ENCODE measurements at regions of chr2 and their contacts with region 1.

Region 1: DNA sequence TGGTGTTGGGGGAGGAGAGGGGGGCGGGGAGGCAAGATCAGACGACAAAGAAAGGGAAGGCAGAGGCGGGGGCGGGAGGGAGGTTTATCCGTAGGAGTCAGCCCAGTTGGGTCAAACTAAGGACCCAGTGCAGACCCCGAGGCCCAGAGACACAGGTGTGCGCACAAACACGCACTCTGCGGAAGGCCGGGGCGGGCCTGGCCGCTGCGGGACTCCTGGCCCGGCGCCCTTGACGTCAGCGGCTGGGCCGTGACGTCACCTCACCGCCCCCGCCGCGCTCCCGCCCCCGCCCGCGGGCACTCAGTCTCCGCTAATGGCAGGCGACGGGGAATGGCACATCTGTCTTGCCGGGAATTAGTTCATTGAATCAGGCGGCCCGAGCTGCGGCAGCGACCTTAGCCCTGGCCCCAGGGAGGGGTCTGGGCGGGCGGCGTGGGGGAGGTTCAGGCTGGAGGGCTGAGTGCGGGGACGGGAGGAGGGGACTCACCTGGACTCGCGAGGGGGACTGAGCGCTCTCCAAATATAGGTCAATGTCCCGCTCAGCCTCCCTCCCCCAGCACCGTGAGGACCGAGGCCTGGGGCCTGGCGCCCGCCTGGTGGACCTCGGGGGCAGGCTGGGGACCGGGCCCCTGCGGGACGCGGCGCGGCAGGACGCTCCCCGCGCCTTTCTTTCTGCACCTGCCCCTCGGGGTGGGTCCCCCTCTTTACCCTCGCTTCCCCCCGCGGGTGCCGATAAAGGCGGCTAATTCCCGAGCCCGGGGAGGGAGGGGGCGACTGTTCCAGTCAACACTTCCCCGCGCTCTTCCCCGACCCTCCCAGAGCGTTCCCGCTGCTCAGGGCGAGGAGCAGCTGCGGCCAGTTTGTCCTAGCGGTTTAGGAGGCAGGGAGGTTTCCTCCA is 15.5 kb upstream of the ECEL1 start:
- DNase-seq: no peak
- ATAC-seq: peak; percentile 63 to 85 (median 72)
- H3K4me3 ChIP-seq: peak overlapping the region; percentile 66
- H3K27ac ChIP-seq: no peak overlapping the region
- H3K4me1 ChIP-seq: no peaks in the 10 kb centered on the region
- H3K27me3 ChIP-seq: no peaks in the 10 kb centered on the region
- CTCF ChIP-seq: no peak

Region 2: DNA sequence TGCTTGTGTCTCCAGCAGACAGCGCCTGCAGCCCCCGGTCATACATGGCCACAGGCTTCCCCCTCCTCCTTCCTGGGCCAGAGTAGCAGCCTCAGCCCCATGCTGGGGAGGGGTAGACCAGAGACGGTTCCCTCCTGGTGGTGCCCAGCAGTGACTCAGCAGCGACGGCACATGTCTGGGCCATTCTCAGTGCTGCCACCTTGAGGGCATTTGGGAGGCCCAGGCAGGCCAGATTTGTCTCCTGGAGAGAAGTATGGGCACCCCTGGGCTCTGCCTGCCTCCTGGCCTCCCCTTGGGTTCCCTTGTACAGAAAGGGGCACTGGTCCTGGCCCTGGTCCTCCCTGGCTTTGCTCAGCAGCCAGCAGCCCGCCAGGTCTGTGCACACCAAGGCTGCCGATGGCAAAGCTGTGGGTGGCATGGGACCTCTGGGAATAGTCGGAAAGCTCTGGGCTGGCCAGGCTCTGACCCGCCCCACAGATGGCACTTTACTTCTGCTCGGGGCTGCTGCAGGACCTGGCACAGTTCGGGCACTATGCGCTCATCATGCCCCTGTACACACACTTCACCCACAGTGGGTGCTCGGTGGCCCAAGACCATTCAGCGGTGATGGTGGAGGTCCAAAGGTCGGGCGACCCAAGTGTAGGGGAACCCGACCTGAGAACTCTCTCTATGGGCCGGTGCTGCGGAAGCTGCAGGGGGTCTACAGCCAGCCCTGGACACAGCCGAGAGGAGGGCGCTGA is 58.6 kb before region 1 on chr2:
- intact Hi-C with region 1: loop called in 1 of 2 experiments (anchors 5 kb)
- DNase-seq: peak; percentile 50 to 68
- ATAC-seq: peak in 3 of 4 donors; percentile 48 to 56 (median 55)
- H3K4me3 ChIP-seq: no peak overlapping the region
- H3K27ac ChIP-seq: peak overlapping the region; percentile 30
- H3K4me1 ChIP-seq: peaks cover 7% of the 10 kb centered on the region
- H3K27me3 ChIP-seq: no peaks in the 10 kb centered on the region
- CTCF ChIP-seq: peak; percentile 40

Region 3: DNA sequence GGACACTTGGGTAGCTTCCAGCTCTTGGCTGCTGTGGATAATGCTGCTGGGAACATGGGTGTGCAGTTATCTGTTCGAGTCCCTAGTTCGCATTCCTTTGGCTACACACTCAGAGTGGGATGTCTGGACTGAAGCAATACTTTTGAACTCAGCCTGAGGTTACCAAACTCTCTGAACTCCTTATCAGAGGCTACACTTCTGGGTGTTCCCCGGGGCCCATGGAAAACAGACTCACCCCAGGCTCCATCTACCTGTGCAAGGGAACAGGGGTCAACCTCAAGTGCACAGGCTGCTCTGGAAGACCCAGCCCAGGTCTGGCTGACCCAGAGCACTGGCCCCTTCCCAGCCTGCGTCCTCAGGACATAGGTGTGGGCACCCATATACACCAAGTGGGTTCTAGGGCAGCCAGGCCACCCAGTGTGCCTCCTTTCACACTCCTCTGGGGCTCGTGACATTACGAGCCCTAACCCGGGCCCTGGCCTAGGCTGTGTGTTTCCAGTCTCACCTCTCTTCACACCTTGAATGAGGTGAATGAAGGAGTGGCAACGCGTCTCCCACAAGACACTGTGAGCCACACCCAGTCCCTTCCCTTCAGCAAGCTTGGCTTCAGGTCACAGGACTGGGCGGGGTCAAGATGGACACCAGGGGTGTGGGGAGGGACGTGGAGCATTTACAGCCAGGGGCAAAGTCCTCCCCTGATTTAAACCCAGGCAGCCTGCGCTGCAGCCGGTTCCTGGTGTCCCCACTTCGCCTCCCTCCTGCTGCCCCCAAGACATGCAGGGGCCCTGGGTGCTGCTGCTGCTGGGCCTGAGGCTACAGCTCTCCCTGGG is 47.5 kb before region 1 on chr2 and contains the start of gene ALPI:
- intact Hi-C with region 1: no loop called
- DNase-seq: peak in 1 of 2 donors; percentile 36
- ATAC-seq: no peak
- H3K4me3 ChIP-seq: no peak within 1 kb of the TSS
- H3K27ac ChIP-seq: no peak within 1 kb of the TSS
- H3K4me1 ChIP-seq: no peaks in the 10 kb centered on the region
- H3K27me3 ChIP-seq: peaks cover 0 to 16% (median 0%) of the 10 kb centered on the region in 3 donors
- CTCF ChIP-seq: no peak
- total RNA-seq, gene ALPI: not detected

Region 4: GRCh38 chr2:232487385-232488096 is 15.6 kb before region 1 on chr2 and contains the start of gene ECEL1:
- intact Hi-C with region 1: no loop called
- DNase-seq: peak in 1 of 2 donors; percentile 44
- ATAC-seq: peak in 2 of 4 donors; percentile 49 to 59
- H3K4me3 ChIP-seq: peak within 1 kb of the TSS; percentile 47
- H3K27ac ChIP-seq: no peak within 1 kb of the TSS
- H3K4me1 ChIP-seq: no peaks in the 10 kb centered on the region
- H3K27me3 ChIP-seq: peaks cover 0 to 59% (median 23%) of the 10 kb centered on the region in 3 donors
- CTCF ChIP-seq: no peak
- total RNA-seq, gene ECEL1: 0.32 to 1.0 (median 0.61) TPM

Region 5: DNA sequence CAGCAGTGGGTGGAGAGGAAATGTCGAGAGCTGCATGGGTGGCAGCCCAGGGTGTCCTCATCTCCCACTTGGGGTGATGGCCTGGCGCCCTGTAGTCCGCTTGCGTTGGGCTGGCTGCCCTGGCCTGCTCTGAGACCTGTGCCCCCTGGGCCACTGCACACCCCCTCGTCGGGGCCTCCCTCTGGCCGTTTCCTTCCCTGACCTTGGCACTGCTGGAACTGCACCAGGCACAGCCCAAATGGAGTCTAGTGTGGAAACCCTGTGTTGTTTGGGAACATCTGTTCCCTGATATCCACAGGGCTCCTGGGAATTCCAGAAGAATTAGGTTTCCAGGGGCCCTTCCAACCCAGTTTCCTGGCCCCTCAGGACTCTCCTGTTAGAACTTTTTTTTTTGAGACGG is 144.1 kb after region 1 on chr2:
- intact Hi-C with region 1: no loop called
- DNase-seq: no peak
- ATAC-seq: peak in 1 of 4 donors; percentile 24
- H3K4me3 ChIP-seq: no peak overlapping the region
- H3K27ac ChIP-seq: no peak overlapping the region
- H3K4me1 ChIP-seq: no peaks in the 10 kb centered on the region
- H3K27me3 ChIP-seq: no peaks in the 10 kb centered on the region
- CTCF ChIP-seq: no peak

Region 6: DNA sequence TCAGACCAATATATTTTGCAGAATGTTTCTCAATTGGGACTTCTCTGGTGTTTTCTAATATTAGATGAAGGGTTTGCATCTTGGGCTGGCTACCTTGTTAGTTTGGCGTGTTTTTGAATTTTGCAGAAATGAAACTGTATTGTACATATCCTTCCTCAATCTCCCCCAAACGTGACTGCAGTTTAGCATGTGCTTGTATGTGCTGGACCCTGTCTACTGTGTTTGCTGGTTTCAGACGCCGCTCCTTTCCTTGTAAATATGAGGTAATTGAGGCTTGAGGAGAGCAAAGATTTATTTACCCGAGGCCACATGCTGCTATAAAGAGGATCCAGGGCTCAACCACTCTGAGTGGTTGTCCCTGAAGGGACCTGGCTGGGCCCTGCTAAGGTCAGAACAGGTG is 452.7 kb after region 1 on chr2:
- intact Hi-C with region 1: no loop called
- DNase-seq: no peak
- ATAC-seq: no peak
- H3K4me3 ChIP-seq: no peak overlapping the region
- H3K27ac ChIP-seq: no peak overlapping the region
- H3K4me1 ChIP-seq: no peaks in the 10 kb centered on the region
- H3K27me3 ChIP-seq: no peaks in the 10 kb centered on the region
- CTCF ChIP-seq: no peak

Measured in psoas muscle (tissue), 8 donors.